Activated B cell treated with CpG ODN at 0.5 μM for 24 hours (primary cell): ENCODE measurements at regions of chr20 and their contacts with region 1.

Region 1: DNA sequence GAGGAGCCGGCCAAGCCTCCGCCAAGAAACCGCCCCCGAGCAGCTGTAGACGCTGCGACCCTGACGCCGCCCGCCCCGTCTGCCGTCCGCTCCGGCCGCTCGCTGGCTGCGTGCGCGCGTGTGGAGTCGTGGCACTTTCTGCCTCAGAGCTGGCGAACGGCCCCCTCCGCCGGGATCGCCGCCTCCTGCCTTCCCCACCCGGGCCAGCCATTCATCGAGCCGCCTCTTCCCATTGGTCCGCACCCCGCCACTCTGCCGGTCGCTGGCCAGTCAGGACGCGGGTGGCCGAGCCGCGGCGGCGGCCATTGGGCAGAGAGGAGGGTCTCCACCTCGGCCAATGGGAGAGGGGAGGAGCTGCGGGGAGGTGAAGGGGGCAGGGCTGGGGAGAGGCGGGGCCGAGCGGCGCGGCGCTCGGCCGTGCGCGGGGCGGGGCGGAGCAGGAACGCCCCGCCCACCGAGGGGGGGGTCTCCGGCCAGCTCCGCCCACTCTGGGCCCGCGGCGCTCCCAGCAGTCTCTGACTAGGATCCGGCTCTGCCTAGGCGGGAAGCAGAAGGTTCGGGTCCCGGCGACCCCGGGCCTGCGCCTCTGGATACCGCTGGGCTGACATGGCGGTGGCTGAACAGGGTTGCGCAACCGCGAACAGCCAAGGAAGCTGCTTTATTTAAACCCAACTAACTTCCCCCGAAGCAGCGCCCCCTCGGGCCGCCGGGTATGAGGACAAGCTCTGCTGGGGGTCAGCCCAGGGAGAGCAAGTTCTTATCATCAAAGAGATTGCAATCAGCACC is at the start of gene RRBP1:
- DNase-seq: peak; percentile 92
- ATAC-seq: peak; percentile 94
- H3K4me3 Mint-ChIP-seq: peak within 1 kb of the TSS; percentile 86
- H3K27ac Mint-ChIP-seq: peak within 1 kb of the TSS; percentile 82
- H3K4me1 Mint-ChIP-seq: peaks cover 20% of the 10 kb centered on the region
- H3K27me3 Mint-ChIP-seq: peaks cover 23% of the 10 kb centered on the region
- CTCF ChIP-seq: no peak
- total RNA-seq, gene RRBP1: 18.9 and 22.0 TPM in 2 replicates

Region 2: DNA sequence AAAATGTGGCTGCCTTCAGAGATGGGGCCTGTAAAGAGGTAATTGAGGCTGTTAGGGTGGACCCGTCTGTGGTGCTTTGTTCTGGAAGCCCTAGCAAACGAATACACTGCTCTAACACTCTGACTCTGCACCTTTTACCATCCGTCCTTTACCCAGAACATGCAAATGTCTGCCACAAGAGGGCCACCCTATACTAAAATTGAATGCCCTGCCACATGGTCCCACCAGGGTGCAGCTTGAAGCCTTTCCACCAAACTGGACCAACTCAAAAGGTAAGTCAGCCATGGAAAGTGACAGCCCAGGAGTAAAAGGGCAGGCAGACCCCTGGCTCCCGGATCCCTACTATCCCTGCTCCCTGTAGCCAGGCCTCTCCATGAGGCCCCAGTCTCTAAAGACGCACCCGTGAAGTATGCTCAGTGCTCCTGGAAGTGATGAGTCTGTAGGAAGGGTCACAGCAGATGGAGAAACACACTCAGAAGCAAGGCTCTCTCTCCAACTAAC is 145.3 kb before region 1 on chr20:
- CTCF ChIA-PET with region 1: interaction called, 4 read pairs
- POLR2A ChIA-PET with region 1: interaction called, 3 read pairs
- intact Hi-C with region 1: loop called (anchors 1 kb)
- DNase-seq: peak; percentile 30
- ATAC-seq: peak; percentile 92
- H3K4me3 Mint-ChIP-seq: no peak overlapping the region
- H3K27ac Mint-ChIP-seq: no peak overlapping the region
- H3K4me1 Mint-ChIP-seq: peaks cover 5% of the 10 kb centered on the region
- H3K27me3 Mint-ChIP-seq: peaks cover 26% of the 10 kb centered on the region
- CTCF ChIP-seq: no peak

Region 3: GRCh38 chr20:17875106-17875980 is 193.0 kb after region 1 on chr20:
- CTCF ChIA-PET with region 1: interaction called, 3 read pairs
- POLR2A ChIA-PET with region 1: interaction called, 10 read pairs
- intact Hi-C with region 1: loop called (anchors 1 kb)
- DNase-seq: no peak
- ATAC-seq: no peak
- H3K4me3 Mint-ChIP-seq: no peak overlapping the region
- H3K27ac Mint-ChIP-seq: no peak overlapping the region
- H3K4me1 Mint-ChIP-seq: peaks cover 63% of the 10 kb centered on the region
- H3K27me3 Mint-ChIP-seq: peaks cover 1% of the 10 kb centered on the region
- CTCF ChIP-seq: no peak

Region 4: DNA sequence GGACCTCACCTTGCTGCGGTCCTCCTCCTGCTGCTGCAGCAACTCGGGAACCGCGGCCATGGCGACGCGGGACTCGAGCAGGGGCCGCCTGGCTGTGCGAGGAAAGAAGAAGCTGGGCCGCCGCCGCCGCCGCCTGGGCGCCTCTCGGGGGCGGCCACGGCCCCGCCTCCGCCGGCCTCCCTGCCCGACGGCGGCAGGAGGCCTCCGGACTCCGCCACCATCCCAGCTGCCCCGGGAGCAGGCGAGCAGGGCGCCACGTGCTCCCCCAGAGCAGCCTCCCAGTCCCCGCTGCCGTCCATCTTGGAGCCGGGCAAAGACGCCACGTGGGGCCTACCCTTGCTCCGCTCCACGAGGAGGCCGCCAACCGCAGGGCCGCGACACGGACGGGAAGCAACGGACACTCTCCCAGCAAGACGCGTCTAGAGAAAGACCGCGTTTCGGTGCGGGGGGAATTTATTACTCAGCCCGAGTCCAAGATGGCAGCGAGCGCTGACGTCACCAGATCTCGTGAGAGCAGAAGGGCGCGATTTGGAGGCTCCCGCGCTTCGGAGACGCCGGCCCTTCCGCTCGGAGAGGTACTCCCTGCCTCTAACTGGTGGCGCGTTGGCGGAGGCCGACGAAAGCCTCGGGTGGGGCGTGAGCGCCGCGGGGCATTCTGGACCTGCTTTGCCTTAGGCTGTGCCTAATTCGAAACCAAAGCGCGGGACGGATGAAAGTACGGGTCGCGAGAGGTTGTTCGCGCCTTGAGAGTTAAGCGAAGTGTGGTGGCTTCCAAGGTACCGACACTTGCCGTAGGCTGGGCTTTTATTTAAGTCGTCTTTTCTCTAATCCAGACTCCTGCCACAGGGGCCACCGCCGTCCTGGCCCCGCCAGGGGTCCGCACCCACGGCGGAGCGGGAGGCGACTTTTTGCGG is 286.3 kb after region 1 on chr20 and contains the starts of genes MGME1 and SNX5:
- CTCF ChIA-PET with region 1: interaction called, 9 read pairs
- POLR2A ChIA-PET with region 1: interaction called, 20 read pairs
- intact Hi-C with region 1: loop called (anchors 1 kb)
- DNase-seq: peak; percentile 98
- ATAC-seq: peak; percentile 83
- H3K4me3 Mint-ChIP-seq: peak within 1 kb of the TSS; percentile 97
- H3K27ac Mint-ChIP-seq: peak within 1 kb of the TSS; percentile 97
- H3K4me1 Mint-ChIP-seq: peaks cover 78% of the 10 kb centered on the region
- H3K27me3 Mint-ChIP-seq: no peaks in the 10 kb centered on the region
- CTCF ChIP-seq: no peak
- total RNA-seq, gene MGME1: 19.0 TPM in 2 replicates
- total RNA-seq, gene SNX5: 125 and 139 TPM in 2 replicates

Region 5: DNA sequence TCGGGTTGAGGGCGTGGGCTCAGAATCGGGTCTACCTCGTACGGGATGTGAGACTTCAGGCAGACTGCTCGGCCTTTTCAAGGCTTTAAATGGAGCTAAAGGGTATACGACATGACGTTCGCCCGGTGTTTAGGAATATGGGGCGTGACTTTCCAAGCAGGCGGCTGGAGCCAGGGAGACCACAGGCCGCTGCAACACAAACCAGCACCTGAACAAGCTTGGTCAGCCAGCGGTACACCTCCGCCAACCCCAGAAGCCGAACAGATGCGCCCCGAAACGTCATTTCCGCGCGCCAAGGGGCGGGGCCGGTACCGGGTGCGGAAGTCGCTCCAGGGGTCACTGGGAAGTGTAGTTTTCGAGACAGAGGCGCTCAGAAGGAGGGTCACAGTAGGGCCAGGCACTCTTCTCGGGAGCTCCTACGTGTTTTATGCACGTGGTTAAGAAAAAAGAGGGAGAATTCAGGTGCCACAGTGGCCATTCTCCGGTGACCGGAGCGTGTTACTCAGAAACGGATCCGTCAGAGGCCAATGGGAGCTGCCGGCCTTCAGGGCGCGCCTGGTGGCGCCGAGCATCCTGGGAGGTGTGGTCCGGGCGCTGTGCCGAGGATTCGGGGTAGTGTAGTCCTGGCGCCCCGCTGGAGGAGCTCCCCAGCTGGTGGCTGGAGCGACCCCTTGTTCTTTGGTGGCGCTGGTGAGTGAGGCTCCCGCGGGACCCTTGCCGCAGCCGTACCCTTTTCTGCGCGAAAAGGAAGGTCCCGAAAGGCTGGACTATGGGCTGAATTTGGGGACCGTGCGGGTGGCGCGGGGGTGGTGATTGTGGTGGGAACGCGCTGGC is 605.8 kb after region 1 on chr20 and contains the start of gene ZNF133:
- CTCF ChIA-PET with region 1: interaction called, 7 read pairs
- POLR2A ChIA-PET with region 1: interaction called, 5 read pairs
- intact Hi-C with region 1: loop called (anchors 1 kb)
- DNase-seq: peak; percentile 99
- ATAC-seq: peak; percentile 96
- H3K4me3 Mint-ChIP-seq: peak within 1 kb of the TSS; percentile 92
- H3K27ac Mint-ChIP-seq: peak within 1 kb of the TSS; percentile 97
- H3K4me1 Mint-ChIP-seq: peaks cover 29% of the 10 kb centered on the region
- H3K27me3 Mint-ChIP-seq: peaks cover 16% of the 10 kb centered on the region
- CTCF ChIP-seq: no peak
- total RNA-seq, gene ZNF133: 7.7 and 8.0 TPM in 2 replicates

Region 6: DNA sequence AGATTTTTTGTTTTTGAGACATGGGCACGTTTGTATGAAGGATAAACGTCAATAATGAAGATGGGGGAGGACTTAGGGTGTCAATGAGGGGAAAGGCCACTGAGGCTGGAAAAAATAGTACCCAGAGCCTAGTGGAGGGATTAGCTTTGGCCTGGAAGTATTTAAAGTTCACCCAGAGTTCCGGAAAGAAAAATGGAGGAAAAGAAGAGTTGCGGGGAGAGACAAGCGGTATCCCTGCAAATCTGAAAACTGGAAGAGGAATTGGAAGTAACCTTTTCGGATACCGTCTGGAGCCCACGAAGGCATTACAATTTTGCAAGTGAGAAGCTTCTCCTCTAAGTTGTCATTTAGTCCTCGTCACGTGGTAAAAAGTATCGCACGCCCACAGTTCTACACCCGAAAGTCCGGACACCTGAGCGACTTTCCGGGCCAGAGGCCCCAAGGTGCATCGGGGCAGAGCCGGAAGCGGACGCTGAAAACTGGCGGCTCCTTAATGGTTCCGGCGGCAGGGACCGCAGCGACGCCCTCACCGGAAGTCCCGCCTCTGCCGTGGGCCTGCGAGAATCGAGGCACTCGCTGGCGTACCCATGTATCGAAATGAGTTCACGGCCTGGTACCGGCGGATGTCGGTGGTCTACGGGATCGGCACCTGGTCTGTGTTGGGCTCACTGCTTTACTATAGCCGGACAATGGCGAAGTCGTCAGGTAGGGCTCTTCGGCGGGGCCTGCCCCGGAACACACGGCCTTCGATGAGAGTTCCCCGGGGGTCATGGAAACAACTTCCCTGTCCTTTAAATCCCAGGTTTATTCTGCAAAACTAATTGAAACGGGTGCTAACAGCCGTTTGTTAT is 884.8 kb after region 1 on chr20 and contains the start of gene SMIM26:
- CTCF ChIA-PET with region 1: no interaction called
- POLR2A ChIA-PET with region 1: no interaction called
- intact Hi-C with region 1: loop called (anchors 1 kb)
- DNase-seq: peak; percentile 91
- ATAC-seq: peak; percentile 96
- H3K4me3 Mint-ChIP-seq: peak within 1 kb of the TSS; percentile 94
- H3K27ac Mint-ChIP-seq: peak within 1 kb of the TSS; percentile 94
- H3K4me1 Mint-ChIP-seq: peaks cover 23% of the 10 kb centered on the region
- H3K27me3 Mint-ChIP-seq: no peaks in the 10 kb centered on the region
- CTCF ChIP-seq: no peak
- total RNA-seq, gene SMIM26: 48.9 and 51.7 TPM in 2 replicates